PC-3 (cell line): ENCODE measurements at regions of chr13 and their contacts with region 1.

Region 1: DNA sequence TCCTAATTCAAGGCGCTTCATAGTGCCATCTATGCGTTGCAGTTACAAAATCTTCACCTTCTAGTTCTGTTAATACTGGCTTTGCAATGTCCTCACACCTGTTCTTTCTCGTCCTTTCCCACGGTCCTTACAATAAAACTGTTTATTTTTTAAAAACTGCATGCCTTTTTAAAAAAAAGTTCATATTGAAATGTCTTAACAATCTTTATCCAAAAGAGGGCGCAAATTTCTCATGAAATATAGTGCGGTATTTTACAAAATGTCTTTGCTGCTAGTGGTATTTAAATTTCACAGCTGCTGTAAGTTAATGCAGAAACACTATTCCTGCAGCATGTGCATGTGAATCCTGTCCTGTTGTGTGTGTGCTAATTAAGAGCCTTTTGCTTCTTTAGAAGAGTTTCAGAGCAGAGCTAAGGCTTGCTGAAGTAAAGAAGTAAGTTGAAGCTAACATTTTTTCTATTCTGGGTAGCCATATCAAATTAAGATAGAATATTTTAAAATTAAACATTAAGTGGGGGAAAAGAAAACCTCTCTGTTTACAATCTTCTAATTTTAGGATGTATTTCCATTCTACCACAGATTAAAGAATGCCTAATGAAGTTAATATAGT is 15.8 kb upstream of the CLDN10 start:
- DNase-seq: peak; percentile 67
- ATAC-seq: no peak
- H3K4me3 ChIP-seq: no peak overlapping the region
- H3K27ac ChIP-seq: no peak overlapping the region
- H3K4me1 ChIP-seq: peaks cover 37% of the 10 kb centered on the region
- H3K27me3 ChIP-seq: no peaks in the 10 kb centered on the region
- CTCF ChIP-seq: peak; percentile 63

Region 2: DNA sequence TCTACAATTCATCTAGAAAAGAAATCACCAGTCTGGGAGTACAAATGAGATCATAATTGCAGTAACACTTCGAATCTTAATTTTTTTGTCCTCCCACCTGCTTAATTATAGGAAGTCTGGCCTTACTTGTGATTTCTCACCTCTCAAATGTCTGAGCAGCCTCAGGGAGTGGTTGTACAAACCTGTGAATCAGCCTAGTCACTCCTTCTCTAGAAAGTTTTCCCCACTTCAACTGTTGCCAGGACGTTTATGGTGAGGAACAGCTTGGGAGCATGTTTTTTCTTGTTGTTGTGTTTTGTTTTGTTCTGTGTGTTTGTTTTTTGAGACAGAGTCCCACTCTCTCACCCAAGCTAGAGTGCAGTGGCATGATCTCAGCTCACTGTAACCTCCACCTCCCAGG is 34.5 kb before region 1 on chr13:
- CTCF ChIA-PET with region 1: no interaction called
- POLR2A ChIA-PET with region 1: no interaction called
- intact Hi-C with region 1: no loop called
- DNase-seq: no peak
- ATAC-seq: no peak
- H3K4me3 ChIP-seq: no peak overlapping the region
- H3K27ac ChIP-seq: no peak overlapping the region
- H3K4me1 ChIP-seq: no peaks in the 10 kb centered on the region
- H3K27me3 ChIP-seq: no peaks in the 10 kb centered on the region
- CTCF ChIP-seq: no peak

Region 3: GRCh38 chr13:95624020-95624419 is 87.3 kb after region 1 on chr13:
- CTCF ChIA-PET with region 1: interaction called, 8 read pairs
- POLR2A ChIA-PET with region 1: no interaction called
- intact Hi-C with region 1: loop called (anchors 10 kb)
- DNase-seq: peak; percentile 58
- ATAC-seq: peak; percentile 70
- H3K4me3 ChIP-seq: no peak overlapping the region
- H3K27ac ChIP-seq: no peak overlapping the region
- H3K4me1 ChIP-seq: no peaks in the 10 kb centered on the region
- H3K27me3 ChIP-seq: no peaks in the 10 kb centered on the region
- CTCF ChIP-seq: peak; percentile 59

Region 4: GRCh38 chr13:96053011-96053703 is 516.4 kb after region 1 on chr13 and contains the start of gene UGGT2:
- CTCF ChIA-PET with region 1: no interaction called
- POLR2A ChIA-PET with region 1: interaction called, 14 read pairs
- intact Hi-C with region 1: no loop called
- DNase-seq: peak; percentile 91
- ATAC-seq: peak; percentile 99
- H3K4me3 ChIP-seq: peak within 1 kb of the TSS; percentile 80
- H3K27ac ChIP-seq: peak within 1 kb of the TSS; percentile 83
- H3K4me1 ChIP-seq: no peaks in the 10 kb centered on the region
- H3K27me3 ChIP-seq: no peaks in the 10 kb centered on the region
- CTCF ChIP-seq: no peak
- total RNA-seq, gene UGGT2: 12.2 and 24.3 TPM in 2 replicates